K562 (cell line): ENCODE measurements at regions of chr18 and their contacts with region 1.

Region 1: DNA sequence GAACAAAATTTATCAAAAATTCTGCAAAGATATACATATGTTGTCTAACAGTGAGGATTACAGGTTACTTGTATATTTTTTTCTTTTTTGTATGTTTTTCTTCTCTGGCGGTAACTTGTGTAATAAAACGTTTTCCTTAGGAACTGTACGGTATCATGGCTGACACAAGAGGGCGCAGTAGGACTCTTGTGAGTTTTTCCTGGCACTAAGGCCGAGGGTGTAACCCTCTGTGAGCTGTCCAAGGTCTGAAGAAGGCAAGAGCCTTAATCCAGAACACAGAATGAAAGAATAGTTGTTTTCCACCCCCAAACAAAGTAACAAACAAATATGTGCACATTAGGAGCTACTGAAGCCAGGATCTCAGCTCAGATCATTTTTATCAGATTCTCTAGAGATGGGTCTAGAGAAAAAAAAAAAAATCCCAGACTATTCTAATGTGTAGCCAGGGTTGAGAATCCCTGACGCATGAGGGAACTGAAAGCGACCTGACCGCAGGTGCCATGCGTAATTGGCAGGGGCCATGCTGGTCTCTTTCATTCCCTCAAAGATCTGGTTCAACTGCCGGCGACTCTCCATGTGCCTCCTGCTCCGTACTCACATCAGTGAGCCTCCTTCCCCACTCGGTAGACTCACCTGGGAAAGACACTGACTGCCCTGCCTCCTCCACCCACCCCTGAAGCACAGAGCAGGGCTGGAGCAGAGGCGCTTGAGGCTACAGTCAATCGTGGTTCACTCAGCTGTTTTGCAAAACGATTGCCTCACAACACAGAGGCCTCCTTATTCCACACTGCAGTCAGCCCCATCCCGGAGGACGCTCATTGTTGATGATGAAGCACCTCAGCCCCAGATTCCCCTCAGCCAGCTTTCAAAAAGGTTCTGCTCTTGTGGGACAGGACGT is 26.9 kb downstream of the TMEM200C start:
- DNase-seq: peak; percentile 42 to 81 (median 55)
- ATAC-seq: peak; percentile 93
- H3K4me3 ChIP-seq: no peak overlapping the region
- H3K27ac ChIP-seq: no peak overlapping the region
- H3K4me1 ChIP-seq: no peaks in the 10 kb centered on the region
- H3K27me3 ChIP-seq: no peaks in the 10 kb centered on the region
- CTCF ChIP-seq: peak; percentile 63 to 72 (median 66)
- EP300 ChIP-seq: no peak
- POLR2A ChIP-seq: no peak
- RAD21 ChIP-seq: peak; percentile 41 to 73; a peak in 3 of 4 replicates

Region 2: GRCh38 chr18:5828913-5829312 is 39.6 kb before region 1 on chr18:
- CTCF ChIA-PET with region 1: no interaction called
- POLR2A ChIA-PET with region 1: no interaction called
- in situ Hi-C with region 1: no loop called
- intact Hi-C with region 1: no loop called
- DNase-seq: no peak
- ATAC-seq: no peak
- H3K4me3 ChIP-seq: no peak overlapping the region
- H3K27ac ChIP-seq: no peak overlapping the region
- H3K4me1 ChIP-seq: no peaks in the 10 kb centered on the region
- H3K27me3 ChIP-seq: no peaks in the 10 kb centered on the region
- CTCF ChIP-seq: no peak
- EP300 ChIP-seq: no peak
- POLR2A ChIP-seq: no peak
- RAD21 ChIP-seq: no peak

Region 3: GRCh38 chr18:5914951-5915350 is 46.5 kb after region 1 on chr18:
- CTCF ChIA-PET with region 1: no interaction called
- POLR2A ChIA-PET with region 1: no interaction called
- in situ Hi-C with region 1: no loop called
- intact Hi-C with region 1: loop called (anchors 10 kb)
- DNase-seq: no peak
- ATAC-seq: no peak
- H3K4me3 ChIP-seq: no peak overlapping the region
- H3K27ac ChIP-seq: no peak overlapping the region
- H3K4me1 ChIP-seq: no peaks in the 10 kb centered on the region
- H3K27me3 ChIP-seq: no peaks in the 10 kb centered on the region
- CTCF ChIP-seq: no peak
- EP300 ChIP-seq: no peak
- POLR2A ChIP-seq: no peak
- RAD21 ChIP-seq: no peak

Region 4: GRCh38 chr18:6401687-6402086 is 533.2 kb after region 1 on chr18:
- CTCF ChIA-PET with region 1: no interaction called
- POLR2A ChIA-PET with region 1: no interaction called
- in situ Hi-C with region 1: no loop called
- intact Hi-C with region 1: loop called (anchors 5 kb)
- DNase-seq: peak in 1 of 4 experiments; percentile 29
- ATAC-seq: peak; percentile 42; the same call in 1 of the 3 replicates
- H3K4me3 ChIP-seq: no peak overlapping the region
- H3K27ac ChIP-seq: no peak overlapping the region
- H3K4me1 ChIP-seq: no peaks in the 10 kb centered on the region
- H3K27me3 ChIP-seq: no peaks in the 10 kb centered on the region
- CTCF ChIP-seq: peak in 1 of 3 experiments; percentile 28; a peak in 1 of 6 replicates
- EP300 ChIP-seq: no peak
- POLR2A ChIP-seq: no peak
- RAD21 ChIP-seq: no peak; a peak in 1 of 4 replicates

Region 5: GRCh38 chr18:6427286-6427685 is 558.8 kb after region 1 on chr18:
- CTCF ChIA-PET with region 1: no interaction called
- POLR2A ChIA-PET with region 1: no interaction called
- in situ Hi-C with region 1: no loop called
- intact Hi-C with region 1: no loop called
- DNase-seq: no peak
- ATAC-seq: no peak
- H3K4me3 ChIP-seq: no peak overlapping the region
- H3K27ac ChIP-seq: no peak overlapping the region
- H3K4me1 ChIP-seq: no peaks in the 10 kb centered on the region
- H3K27me3 ChIP-seq: no peaks in the 10 kb centered on the region
- CTCF ChIP-seq: no peak
- EP300 ChIP-seq: no peak
- POLR2A ChIP-seq: no peak
- RAD21 ChIP-seq: no peak